AG04450 (cell line): ENCODE measurements at regions of chr1 and their contacts with region 1.

Region 1: DNA sequence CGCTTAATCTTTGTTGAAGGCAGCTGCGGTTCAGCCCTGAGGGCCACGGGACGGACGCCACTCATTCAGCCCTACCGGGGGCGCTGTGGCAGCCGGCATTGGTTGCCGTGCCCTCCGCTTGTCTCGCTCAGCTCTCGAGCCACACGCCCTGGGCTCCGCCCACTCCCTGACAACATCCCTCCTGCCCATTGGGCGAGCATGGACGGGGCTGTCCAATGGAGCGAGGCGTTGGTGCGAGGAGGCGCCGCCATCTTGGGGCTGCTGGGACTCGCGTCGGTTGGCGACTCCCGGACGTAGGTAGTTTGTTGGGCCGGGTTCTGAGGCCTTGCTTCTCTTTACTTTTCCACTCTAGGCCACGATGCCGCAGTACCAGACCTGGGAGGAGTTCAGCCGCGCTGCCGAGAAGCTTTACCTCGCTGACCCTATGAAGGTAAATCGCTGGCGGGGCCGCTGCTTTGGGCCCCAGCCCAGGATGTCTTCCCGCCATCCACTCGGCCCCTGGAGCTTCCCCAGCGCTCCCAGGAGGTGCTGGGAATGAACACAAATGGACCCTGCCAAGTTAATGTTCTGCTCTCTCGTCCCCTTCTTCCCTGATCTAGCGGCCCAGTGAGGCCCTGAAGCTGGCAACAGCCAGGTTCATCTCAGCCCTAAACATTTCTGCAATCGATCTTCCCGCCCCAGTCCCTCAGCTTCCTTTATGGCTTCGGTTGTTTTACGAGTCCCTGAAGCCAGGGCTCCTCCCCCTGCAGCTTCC is at the start of gene SRP9:
- DNase-seq: peak; percentile 94
- H3K4me3 ChIP-seq: peak within 1 kb of the TSS; percentile 84
- H3K27ac ChIP-seq: peak within 1 kb of the TSS; percentile 93
- H3K27me3 ChIP-seq: no peaks in the 10 kb centered on the region
- CTCF ChIP-seq: peak; percentile 86
- polyA plus RNA-seq, gene SRP9: 361 and 527 TPM in 2 replicates

Region 2: GRCh38 chr1:225480825-225481434 is 296.8 kb before region 1 on chr1:
- CTCF ChIA-PET with region 1: interaction called, 102 read pairs
- POLR2A ChIA-PET with region 1: interaction called, 12 read pairs
- DNase-seq: no peak
- H3K4me3 ChIP-seq: no peak overlapping the region
- H3K27ac ChIP-seq: no peak overlapping the region
- H3K27me3 ChIP-seq: no peaks in the 10 kb centered on the region
- CTCF ChIP-seq: peak; percentile 72

Region 3: DNA sequence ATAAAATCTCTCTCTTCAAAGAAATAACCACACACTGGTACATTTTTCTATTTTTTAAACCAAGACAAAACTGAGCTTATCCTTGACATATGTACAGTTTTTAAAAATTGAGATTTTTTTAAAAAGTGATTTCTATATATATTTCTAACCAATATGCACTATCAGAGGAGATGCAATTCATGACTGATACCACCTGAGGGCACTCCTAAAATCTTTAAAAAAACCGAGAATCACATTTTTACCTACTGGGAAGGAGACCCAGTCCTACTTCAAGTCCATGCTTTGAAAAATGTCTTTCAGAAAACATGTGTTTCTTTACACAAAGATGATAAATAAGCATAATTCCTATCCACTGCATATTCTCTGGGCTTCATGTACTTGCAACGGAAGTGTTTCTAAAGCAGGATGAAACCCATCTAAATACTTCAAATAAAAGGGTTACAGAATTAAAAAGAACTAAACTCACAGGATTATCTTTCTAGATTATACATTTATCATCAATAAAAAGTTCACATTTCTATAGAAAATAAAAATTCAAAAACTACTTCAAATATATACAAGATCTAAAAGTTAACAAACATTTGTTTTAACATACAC is 223.4 kb before region 1 on chr1:
- CTCF ChIA-PET with region 1: interaction called, 34 read pairs
- POLR2A ChIA-PET with region 1: no interaction called
- DNase-seq: no peak
- H3K4me3 ChIP-seq: no peak overlapping the region
- H3K27ac ChIP-seq: no peak overlapping the region
- H3K27me3 ChIP-seq: no peaks in the 10 kb centered on the region
- CTCF ChIP-seq: peak; percentile 62

Region 4: DNA sequence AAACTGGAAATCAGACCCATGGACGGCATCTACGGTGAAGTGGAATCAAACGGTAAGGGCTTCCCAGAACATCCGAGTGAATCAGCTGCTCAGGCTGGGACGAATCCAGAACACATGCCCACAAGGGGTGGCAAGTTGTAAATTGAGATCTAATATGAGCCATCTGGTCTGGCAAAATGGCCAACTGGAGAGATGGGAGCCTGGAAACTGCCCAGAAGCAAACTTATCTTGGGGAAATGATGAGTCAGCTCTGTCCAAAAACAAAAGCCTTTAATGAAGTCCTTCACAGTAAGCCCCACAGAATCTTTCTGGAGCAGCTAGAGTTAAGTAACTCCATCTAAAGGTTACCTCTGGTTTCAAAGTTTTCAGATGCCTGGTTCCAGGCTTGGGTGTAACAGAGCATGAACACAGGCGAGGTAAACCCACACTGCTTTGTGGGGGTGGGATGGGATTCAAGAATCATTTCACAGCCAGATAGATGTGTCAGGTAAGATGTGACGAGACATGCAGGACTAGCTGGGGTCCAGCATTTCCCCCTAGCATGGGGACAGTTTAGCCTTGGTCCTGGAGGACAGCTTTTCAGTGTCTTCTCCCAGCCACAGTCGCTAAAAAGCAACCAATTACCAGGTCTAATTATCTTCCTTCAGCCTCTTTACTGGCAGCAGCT is 10.7 kb before region 1 on chr1:
- CTCF ChIA-PET with region 1: interaction called, 14 read pairs
- POLR2A ChIA-PET with region 1: interaction called, 16 read pairs
- DNase-seq: peak; percentile 74
- H3K4me3 ChIP-seq: 0 out of 2 replicates have a peak overlapping the region, but pooled peaks have one; percentile 4
- H3K27ac ChIP-seq: peak overlapping the region; percentile 89
- H3K27me3 ChIP-seq: no peaks in the 10 kb centered on the region
- CTCF ChIP-seq: no peak

Region 5: GRCh38 chr1:225809842-225810578 is 32.2 kb after region 1 on chr1 and contains the start of gene EPHX1:
- CTCF ChIA-PET with region 1: interaction called, 4 read pairs
- POLR2A ChIA-PET with region 1: interaction called, 16 read pairs
- DNase-seq: peak; percentile 61
- H3K4me3 ChIP-seq: peak within 1 kb of the TSS; percentile 81
- H3K27ac ChIP-seq: peak within 1 kb of the TSS; percentile 39
- H3K27me3 ChIP-seq: no peaks in the 10 kb centered on the region
- CTCF ChIP-seq: peak; percentile 42
- polyA plus RNA-seq, gene EPHX1: 41.3 and 48.5 TPM in 2 replicates

Region 6: GRCh38 chr1:225911191-225912130 is 133.7 kb after region 1 on chr1:
- CTCF ChIA-PET with region 1: interaction called, 15 read pairs
- POLR2A ChIA-PET with region 1: no interaction called
- DNase-seq: no peak
- H3K4me3 ChIP-seq: 0 out of 2 replicates have a peak overlapping the region, but pooled peaks have one; percentile 10
- H3K27ac ChIP-seq: no peak overlapping the region
- H3K27me3 ChIP-seq: no peaks in the 10 kb centered on the region
- CTCF ChIP-seq: peak; percentile 76

Region 7: GRCh38 chr1:225944951-225945350 is 167.2 kb after region 1 on chr1:
- CTCF ChIA-PET with region 1: no interaction called
- POLR2A ChIA-PET with region 1: no interaction called
- DNase-seq: no peak
- H3K4me3 ChIP-seq: no peak overlapping the region
- H3K27ac ChIP-seq: no peak overlapping the region
- H3K27me3 ChIP-seq: peaks cover 19% of the 10 kb centered on the region
- CTCF ChIP-seq: no peak